ENCODE measurements at regions of chr7 and their contacts with region 1.

Region 1: DNA sequence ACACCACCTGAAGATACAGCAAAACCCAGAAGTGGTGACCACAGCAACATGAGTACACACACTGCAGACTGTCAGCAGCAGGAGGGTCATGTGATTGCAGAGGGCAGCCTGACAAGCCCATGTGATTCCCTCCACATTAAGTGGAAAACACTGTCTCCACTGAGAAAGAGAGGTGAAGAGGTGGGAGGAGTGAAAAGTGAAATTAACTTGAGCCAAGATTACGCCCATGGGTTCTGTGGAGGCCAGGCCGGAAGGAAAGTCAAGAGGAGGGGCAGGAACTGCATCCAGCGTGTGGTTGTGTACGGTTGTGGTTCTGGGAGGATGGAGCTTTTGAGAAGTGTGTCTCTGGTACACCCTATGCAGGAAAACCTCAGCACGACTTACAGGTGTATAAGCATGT is 138.5 kb downstream of the PLXNA4 start:
- DNase-seq: peak; percentile 52
- H3K4me3 Mint-ChIP-seq: peak overlapping the region; percentile 10
- H3K27ac Mint-ChIP-seq: no peak overlapping the region
- H3K4me1 Mint-ChIP-seq: peaks cover 78% of the 10 kb centered on the region
- H3K27me3 Mint-ChIP-seq: no peaks in the 10 kb centered on the region

Region 2: GRCh38 chr7:132451161-132451560 is 13.4 kb after region 1 on chr7:
- CTCF ChIA-PET with region 1: interaction called, 10 read pairs
- intact Hi-C with region 1: no loop called
- DNase-seq: no peak
- H3K4me3 Mint-ChIP-seq: no peak overlapping the region
- H3K27ac Mint-ChIP-seq: no peak overlapping the region
- H3K4me1 Mint-ChIP-seq: peaks cover 46% of the 10 kb centered on the region
- H3K27me3 Mint-ChIP-seq: no peaks in the 10 kb centered on the region

Region 3: DNA sequence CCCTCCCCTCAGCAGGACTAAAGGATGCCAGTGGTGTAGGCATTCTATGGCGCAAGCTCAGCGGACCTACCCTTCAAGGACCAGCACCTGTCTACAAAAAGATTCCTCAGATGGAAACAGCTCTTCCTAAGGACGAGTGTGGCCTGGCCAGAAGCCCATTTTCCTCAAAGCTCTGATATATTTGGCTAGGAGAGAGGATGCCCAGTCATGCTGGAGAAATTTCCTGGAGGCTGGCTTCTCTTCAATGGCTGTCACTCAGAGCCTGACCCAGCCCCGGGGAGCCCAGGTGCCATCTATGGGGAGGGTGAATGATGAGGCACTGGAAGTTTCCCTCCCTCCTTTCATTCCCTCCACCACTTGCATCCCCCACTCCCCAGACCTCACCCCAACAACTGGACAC is 27.0 kb after region 1 on chr7:
- CTCF ChIA-PET with region 1: no interaction called
- intact Hi-C with region 1: loop called (anchors 1 kb)
- DNase-seq: no peak
- H3K4me3 Mint-ChIP-seq: no peak overlapping the region
- H3K27ac Mint-ChIP-seq: no peak overlapping the region
- H3K4me1 Mint-ChIP-seq: peaks cover 22% of the 10 kb centered on the region
- H3K27me3 Mint-ChIP-seq: no peaks in the 10 kb centered on the region

Region 4: GRCh38 chr7:132485600-132486273 is 48.0 kb after region 1 on chr7:
- CTCF ChIA-PET with region 1: no interaction called
- intact Hi-C with region 1: no loop called
- DNase-seq: peak; percentile 77
- H3K4me3 Mint-ChIP-seq: peak overlapping the region; percentile 19
- H3K27ac Mint-ChIP-seq: peak overlapping the region; percentile 61
- H3K4me1 Mint-ChIP-seq: peaks cover 36% of the 10 kb centered on the region
- H3K27me3 Mint-ChIP-seq: no peaks in the 10 kb centered on the region

Measured in activated naive CD4-positive, alpha-beta T cell treated with anti-CD3 and anti-CD28 coated beads for 36 hours (primary cell).